GM12878 (cell line): ENCODE measurements at regions of chr22 and their contacts with region 1.

Region 1: GRCh38 chr22:33302049-33302545 is 243.9 kb upstream of the SYN3 start:
- DNase-seq: peak; percentile 39
- ATAC-seq: peak; percentile 71
- H3K4me3 ChIP-seq: no peak overlapping the region
- H3K27ac ChIP-seq: no peak overlapping the region
- H3K4me1 ChIP-seq: peaks cover 50% of the 10 kb centered on the region
- H3K27me3 ChIP-seq: no peaks in the 10 kb centered on the region
- CTCF ChIP-seq: peak; percentile 96 to 99 (median 97); a peak in 5 of 6 replicates
- EP300 ChIP-seq: no peak
- POLR2A ChIP-seq: no peak
- RAD21 ChIP-seq: peak; percentile 99

Region 2: GRCh38 chr22:33095661-33096060 is 206.4 kb before region 1 on chr22:
- CTCF ChIA-PET with region 1: no interaction called
- POLR2A ChIA-PET with region 1: no interaction called
- RAD21 ChIA-PET with region 1: no interaction called
- SMC1A ChIA-PET with region 1: no interaction called
- in situ Hi-C with region 1: no loop called
- intact Hi-C with region 1: no loop called
- DNase-seq: no peak
- ATAC-seq: no peak
- H3K4me3 ChIP-seq: no peak overlapping the region
- H3K27ac ChIP-seq: no peak overlapping the region
- H3K4me1 ChIP-seq: no peaks in the 10 kb centered on the region
- H3K27me3 ChIP-seq: no peaks in the 10 kb centered on the region
- CTCF ChIP-seq: no peak
- EP300 ChIP-seq: no peak
- POLR2A ChIP-seq: no peak
- RAD21 ChIP-seq: no peak

Region 3: GRCh38 chr22:33240888-33241475 is 61.1 kb before region 1 on chr22:
- CTCF ChIA-PET with region 1: interaction called, 8 read pairs
- POLR2A ChIA-PET with region 1: no interaction called
- RAD21 ChIA-PET with region 1: interaction called, 3 read pairs
- SMC1A ChIA-PET with region 1: interaction called, 6 read pairs
- in situ Hi-C with region 1: no loop called
- intact Hi-C with region 1: loop called (anchors 2 kb)
- DNase-seq: no peak
- ATAC-seq: no peak
- H3K4me3 ChIP-seq: no peak overlapping the region
- H3K27ac ChIP-seq: no peak overlapping the region; the same call in 1 of the 2 replicates
- H3K4me1 ChIP-seq: peaks cover 25% of the 10 kb centered on the region
- H3K27me3 ChIP-seq: no peaks in the 10 kb centered on the region
- CTCF ChIP-seq: no peak
- EP300 ChIP-seq: no peak
- POLR2A ChIP-seq: no peak
- RAD21 ChIP-seq: no peak

Region 4: DNA sequence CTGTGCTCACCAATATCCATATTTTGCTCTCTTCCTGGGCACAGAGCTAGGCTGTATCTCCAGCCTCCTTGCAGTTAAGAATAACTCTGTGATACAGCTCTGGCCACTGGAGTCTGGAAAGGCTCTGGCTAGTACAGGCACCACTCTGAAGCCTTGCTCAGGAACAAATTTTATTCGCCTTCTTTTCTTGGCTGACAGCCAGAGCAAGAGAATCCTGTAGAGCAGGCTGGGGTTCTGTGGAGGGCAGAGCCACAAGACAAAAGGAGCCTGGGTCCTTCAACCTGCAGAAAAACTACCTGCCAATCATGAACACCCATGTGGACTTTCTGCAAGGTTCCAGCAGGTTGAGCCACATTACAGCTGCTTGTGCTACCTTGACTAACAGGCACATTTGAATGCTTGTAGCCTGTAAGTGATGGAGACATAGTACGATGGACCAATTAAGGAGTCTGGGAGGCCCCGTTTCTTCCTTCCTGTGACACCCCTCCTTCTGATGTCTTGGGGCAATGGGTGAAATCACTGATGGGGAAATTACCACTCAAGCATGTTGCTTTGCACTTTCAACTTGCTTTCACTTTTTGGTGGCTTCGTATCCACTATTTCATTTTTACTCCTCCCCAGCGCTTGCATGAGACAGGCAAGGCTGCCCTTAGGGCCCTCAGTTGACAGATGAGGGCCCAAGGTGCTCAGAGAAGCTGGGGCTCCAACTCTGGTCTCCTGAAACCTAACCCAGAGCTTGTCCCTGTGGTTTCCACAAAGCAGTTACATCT is 23.3 kb after region 1 on chr22:
- CTCF ChIA-PET with region 1: interaction called, 10 read pairs
- POLR2A ChIA-PET with region 1: interaction called, 3 read pairs
- RAD21 ChIA-PET with region 1: interaction called, 14 read pairs
- SMC1A ChIA-PET with region 1: interaction called, 15 read pairs
- in situ Hi-C with region 1: no loop called
- intact Hi-C with region 1: no loop called
- DNase-seq: peak; percentile 87
- ATAC-seq: peak; percentile 92
- H3K4me3 ChIP-seq: peak overlapping the region; percentile 23; the same call in 1 of the 2 replicates
- H3K27ac ChIP-seq: peak overlapping the region; percentile 63
- H3K4me1 ChIP-seq: peaks cover 37% of the 10 kb centered on the region
- H3K27me3 ChIP-seq: no peaks in the 10 kb centered on the region
- CTCF ChIP-seq: no peak
- EP300 ChIP-seq: 0 out of 4 replicates have a peak, but pooled peaks of 1 of the 2 experiments have one; percentile 31
- POLR2A ChIP-seq: peak; percentile 61
- RAD21 ChIP-seq: peak; percentile 19; the same call in 1 of the 2 replicates

Region 5: GRCh38 chr22:33472462-33473344 is 170.6 kb after region 1 on chr22:
- CTCF ChIA-PET with region 1: interaction called, 34 read pairs
- POLR2A ChIA-PET with region 1: interaction called, 5 read pairs
- RAD21 ChIA-PET with region 1: interaction called, 14 read pairs
- SMC1A ChIA-PET with region 1: interaction called, 14 read pairs
- in situ Hi-C with region 1: no loop called
- intact Hi-C with region 1: loop called (anchors 1 kb)
- DNase-seq: peak; percentile 78
- ATAC-seq: peak; percentile 79
- H3K4me3 ChIP-seq: peak overlapping the region; percentile 26; the same call in 1 of the 2 replicates
- H3K27ac ChIP-seq: peak overlapping the region; percentile 99
- H3K4me1 ChIP-seq: peaks cover 42% of the 10 kb centered on the region
- H3K27me3 ChIP-seq: no peaks in the 10 kb centered on the region
- CTCF ChIP-seq: no peak
- EP300 ChIP-seq: peak; percentile 99 to 100
- POLR2A ChIP-seq: no peak
- RAD21 ChIP-seq: no peak

Region 6: GRCh38 chr22:33573479-33573878 is 271.4 kb after region 1 on chr22:
- CTCF ChIA-PET with region 1: interaction called, 85 read pairs
- POLR2A ChIA-PET with region 1: interaction called, 3 read pairs
- RAD21 ChIA-PET with region 1: interaction called, 51 read pairs
- SMC1A ChIA-PET with region 1: interaction called, 64 read pairs
- in situ Hi-C with region 1: loop called (anchors 5 kb)
- intact Hi-C with region 1: loop called (anchors 2 kb)
- DNase-seq: no peak
- ATAC-seq: peak; percentile 33
- H3K4me3 ChIP-seq: no peak overlapping the region
- H3K27ac ChIP-seq: no peak overlapping the region
- H3K4me1 ChIP-seq: peaks cover 20% of the 10 kb centered on the region
- H3K27me3 ChIP-seq: no peaks in the 10 kb centered on the region
- CTCF ChIP-seq: no peak
- EP300 ChIP-seq: no peak
- POLR2A ChIP-seq: no peak
- RAD21 ChIP-seq: no peak

Region 7: DNA sequence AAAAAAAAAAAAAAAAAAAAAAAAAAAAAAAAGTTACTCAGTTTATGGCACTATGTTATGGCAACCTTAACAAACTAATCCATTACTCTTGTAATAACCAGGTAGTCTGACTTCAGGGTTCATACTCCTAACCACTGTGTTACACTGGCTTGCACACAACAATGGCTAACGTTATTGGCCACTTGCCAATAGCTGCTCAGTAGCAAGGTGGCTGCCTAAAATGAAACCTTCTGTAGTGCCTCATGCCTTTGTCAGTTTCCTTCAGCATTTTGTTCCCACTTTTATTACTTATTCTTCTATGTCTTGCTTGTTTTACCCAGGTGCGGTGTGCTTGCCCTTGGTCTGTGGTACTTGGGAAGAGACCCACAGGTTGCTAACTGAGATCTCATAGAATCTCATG is 791.5 kb after region 1 on chr22:
- CTCF ChIA-PET with region 1: no interaction called
- POLR2A ChIA-PET with region 1: no interaction called
- RAD21 ChIA-PET with region 1: no interaction called
- SMC1A ChIA-PET with region 1: no interaction called
- in situ Hi-C with region 1: loop called (anchors 5 kb)
- intact Hi-C with region 1: no loop called
- DNase-seq: no peak
- ATAC-seq: no peak
- H3K4me3 ChIP-seq: no peak overlapping the region
- H3K27ac ChIP-seq: no peak overlapping the region
- H3K4me1 ChIP-seq: no peaks in the 10 kb centered on the region
- H3K27me3 ChIP-seq: no peaks in the 10 kb centered on the region
- CTCF ChIP-seq: no peak
- EP300 ChIP-seq: no peak
- POLR2A ChIP-seq: no peak
- RAD21 ChIP-seq: no peak

Region 8: GRCh38 chr22:35140879-35141745 is 1839.0 kb after region 1 on chr22:
- CTCF ChIA-PET with region 1: interaction called, 3 read pairs
- POLR2A ChIA-PET with region 1: no interaction called
- RAD21 ChIA-PET with region 1: no interaction called
- SMC1A ChIA-PET with region 1: no interaction called
- in situ Hi-C with region 1: loop called (anchors 10 kb)
- intact Hi-C with region 1: no loop called
- DNase-seq: no peak
- ATAC-seq: peak; percentile 89
- H3K4me3 ChIP-seq: no peak overlapping the region
- H3K27ac ChIP-seq: peak overlapping the region; percentile 46
- H3K4me1 ChIP-seq: peaks cover 17% of the 10 kb centered on the region
- H3K27me3 ChIP-seq: no peaks in the 10 kb centered on the region
- CTCF ChIP-seq: peak; percentile 61 to 75 (median 68)
- EP300 ChIP-seq: no peak
- POLR2A ChIP-seq: no peak
- RAD21 ChIP-seq: peak; percentile 86